ENCODE measurements at regions of chr2 and their contacts with region 1.

Region 1: DNA sequence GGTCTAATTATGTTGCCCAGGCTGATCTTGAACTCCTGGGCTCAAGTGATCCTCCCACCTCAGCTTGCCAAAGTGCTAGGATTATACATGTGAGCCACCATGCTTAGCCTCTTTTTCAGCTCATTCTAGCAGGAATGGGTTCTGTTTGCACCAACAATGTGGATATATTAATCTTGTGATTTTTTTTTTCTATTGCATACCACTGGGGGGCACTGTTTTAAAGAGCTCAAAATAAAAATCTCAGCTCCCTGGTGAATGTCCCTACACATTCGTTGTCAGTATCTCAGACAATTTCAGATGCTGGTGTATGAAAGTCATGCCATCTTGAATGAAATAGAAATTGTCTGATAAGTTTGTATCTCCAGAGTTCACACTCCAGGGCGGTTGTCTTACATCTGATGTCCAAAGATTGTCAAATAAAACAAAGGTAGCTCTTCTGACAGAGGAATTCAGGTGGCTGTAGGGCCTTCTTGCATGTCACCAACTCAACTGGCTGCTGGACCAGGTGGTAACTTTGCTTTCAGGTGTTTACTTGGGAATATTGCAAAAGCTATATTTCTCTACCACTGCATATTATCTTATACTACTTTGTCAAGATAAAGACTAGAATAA is 3.1 kb upstream of the MATN3 start:
- DNase-seq: peak in 2 of 5 donors; percentile 17 to 39
- H3K4me3 ChIP-seq: no peak overlapping the region
- H3K4me3 Mint-ChIP-seq: no peak overlapping the region
- H3K27ac ChIP-seq: no peak overlapping the region
- H3K27ac Mint-ChIP-seq: no peak overlapping the region
- H3K4me1 ChIP-seq: peaks cover 6% of the 10 kb centered on the region
- H3K4me1 Mint-ChIP-seq: peaks cover 9 to 14% (median 12%) of the 10 kb centered on the region in 3 donors
- H3K27me3 ChIP-seq: peaks cover 23% of the 10 kb centered on the region
- H3K27me3 Mint-ChIP-seq: peaks cover 27 to 33% of the 10 kb centered on the region in 2 donors

Region 2: DNA sequence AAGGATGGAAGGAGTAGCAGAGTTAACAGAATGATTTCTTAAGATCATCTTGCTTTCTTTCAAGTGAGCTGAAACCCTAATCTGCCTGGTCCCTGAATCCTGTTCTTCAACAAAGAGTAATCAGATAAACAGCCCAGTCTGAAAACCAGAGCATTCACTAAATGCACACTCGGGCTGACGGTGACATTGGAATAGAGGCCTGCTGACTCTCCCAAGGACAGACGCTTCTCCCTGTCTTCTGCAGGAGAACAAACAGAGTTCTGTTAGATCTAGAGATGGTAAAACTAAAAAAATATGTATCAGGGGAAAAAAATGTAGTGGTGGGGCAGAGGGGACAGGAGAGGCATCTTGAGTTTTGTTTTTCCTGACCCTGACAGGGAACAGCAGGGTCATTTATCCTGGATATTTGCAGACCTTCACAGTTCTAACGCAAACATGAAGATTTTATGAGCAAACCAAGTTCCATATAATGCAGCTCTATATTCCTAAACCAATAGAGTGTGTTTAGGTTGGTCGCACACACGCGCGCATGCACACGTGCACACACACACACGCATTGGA is 10.4 kb before region 1 on chr2:
- CTCF ChIA-PET with region 1: interaction called, 12 read pairs
- POLR2A ChIA-PET with region 1: no interaction called
- DNase-seq: no peak
- H3K4me3 ChIP-seq: no peak overlapping the region
- H3K4me3 Mint-ChIP-seq: no peak overlapping the region
- H3K27ac ChIP-seq: no peak overlapping the region
- H3K27ac Mint-ChIP-seq: no peak overlapping the region
- H3K4me1 ChIP-seq: no peaks in the 10 kb centered on the region
- H3K4me1 Mint-ChIP-seq: no peaks in the 10 kb centered on the region
- H3K27me3 ChIP-seq: no peaks in the 10 kb centered on the region
- H3K27me3 Mint-ChIP-seq: peaks cover 14 to 38% of the 10 kb centered on the region in 2 donors

Region 3: GRCh38 chr2:20042531-20042930 is 27.0 kb after region 1 on chr2:
- CTCF ChIA-PET with region 1: interaction called, 15 read pairs
- POLR2A ChIA-PET with region 1: no interaction called
- DNase-seq: no peak
- H3K4me3 ChIP-seq: no peak overlapping the region
- H3K4me3 Mint-ChIP-seq: no peak overlapping the region
- H3K27ac ChIP-seq: no peak overlapping the region
- H3K27ac Mint-ChIP-seq: no peak overlapping the region
- H3K4me1 ChIP-seq: no peaks in the 10 kb centered on the region
- H3K4me1 Mint-ChIP-seq: peaks cover 14 to 41% (median 38%) of the 10 kb centered on the region in 3 donors
- H3K27me3 ChIP-seq: no peaks in the 10 kb centered on the region
- H3K27me3 Mint-ChIP-seq: no peaks in the 10 kb centered on the region

Region 4: DNA sequence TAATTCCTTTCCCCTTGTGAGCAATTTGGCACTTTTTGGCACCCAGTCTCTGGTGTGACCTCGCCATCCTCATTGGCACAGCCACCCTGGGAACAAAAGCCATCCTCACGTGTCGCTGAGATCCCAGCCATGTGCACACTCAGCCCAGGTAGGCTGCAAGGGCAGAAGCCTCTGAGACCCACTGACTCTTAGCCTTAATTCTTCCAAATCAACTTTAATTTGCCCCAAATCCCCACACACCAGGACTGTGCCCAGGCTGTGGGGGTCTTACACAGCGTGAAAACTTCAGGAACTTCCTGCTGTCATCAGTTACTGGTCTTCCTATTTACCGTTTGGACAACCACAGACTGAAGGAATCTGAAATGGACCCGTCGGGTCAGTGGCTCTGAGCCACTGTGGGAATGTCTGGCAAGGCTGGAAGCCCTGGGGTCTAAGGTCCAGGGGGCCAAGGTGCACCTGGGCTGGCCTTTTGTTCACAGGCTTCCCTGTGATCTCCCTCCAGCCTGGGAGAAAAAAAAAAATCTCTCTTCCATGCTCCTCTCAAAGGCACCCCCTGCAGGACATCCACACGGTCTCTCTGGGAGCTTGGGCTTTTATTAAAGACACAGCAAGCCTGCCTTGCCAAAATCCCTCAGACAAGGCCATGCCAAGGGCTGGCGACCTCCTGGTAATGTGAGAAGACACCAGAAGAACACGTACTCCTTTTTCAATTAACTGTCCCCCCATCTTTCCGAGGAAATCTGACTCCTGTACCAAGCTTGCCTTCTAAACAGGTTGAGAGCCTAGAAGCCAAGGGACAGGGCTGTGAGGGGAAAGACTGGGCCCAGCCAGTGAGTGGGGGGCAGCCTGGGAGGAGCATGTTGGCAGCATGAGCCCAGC is 77.9 kb after region 1 on chr2:
- CTCF ChIA-PET with region 1: interaction called, 10 read pairs
- POLR2A ChIA-PET with region 1: no interaction called
- DNase-seq: no peak
- H3K4me3 ChIP-seq: no peak overlapping the region
- H3K4me3 Mint-ChIP-seq: no peak overlapping the region
- H3K27ac ChIP-seq: no peak overlapping the region
- H3K27ac Mint-ChIP-seq: peak overlapping the region in 1 of 8 donors; percentile 15
- H3K4me1 ChIP-seq: no peaks in the 10 kb centered on the region
- H3K4me1 Mint-ChIP-seq: no peaks in the 10 kb centered on the region
- H3K27me3 ChIP-seq: no peaks in the 10 kb centered on the region
- H3K27me3 Mint-ChIP-seq: peaks cover 20 to 32% of the 10 kb centered on the region in 2 donors